ENCODE measurements at regions of chr1 and their contacts with region 1.

Region 1: GRCh38 chr1:40951943-40952743 is 27.4 kb upstream of the CTPS1 start:
- DNase-seq: peak; percentile 84
- H3K4me3 Mint-ChIP-seq: no peak overlapping the region
- H3K27ac Mint-ChIP-seq: no peak overlapping the region
- H3K4me1 Mint-ChIP-seq: peaks cover 49% of the 10 kb centered on the region
- H3K27me3 Mint-ChIP-seq: no peaks in the 10 kb centered on the region
- CTCF ChIP-seq: peak; percentile 94

Region 2: DNA sequence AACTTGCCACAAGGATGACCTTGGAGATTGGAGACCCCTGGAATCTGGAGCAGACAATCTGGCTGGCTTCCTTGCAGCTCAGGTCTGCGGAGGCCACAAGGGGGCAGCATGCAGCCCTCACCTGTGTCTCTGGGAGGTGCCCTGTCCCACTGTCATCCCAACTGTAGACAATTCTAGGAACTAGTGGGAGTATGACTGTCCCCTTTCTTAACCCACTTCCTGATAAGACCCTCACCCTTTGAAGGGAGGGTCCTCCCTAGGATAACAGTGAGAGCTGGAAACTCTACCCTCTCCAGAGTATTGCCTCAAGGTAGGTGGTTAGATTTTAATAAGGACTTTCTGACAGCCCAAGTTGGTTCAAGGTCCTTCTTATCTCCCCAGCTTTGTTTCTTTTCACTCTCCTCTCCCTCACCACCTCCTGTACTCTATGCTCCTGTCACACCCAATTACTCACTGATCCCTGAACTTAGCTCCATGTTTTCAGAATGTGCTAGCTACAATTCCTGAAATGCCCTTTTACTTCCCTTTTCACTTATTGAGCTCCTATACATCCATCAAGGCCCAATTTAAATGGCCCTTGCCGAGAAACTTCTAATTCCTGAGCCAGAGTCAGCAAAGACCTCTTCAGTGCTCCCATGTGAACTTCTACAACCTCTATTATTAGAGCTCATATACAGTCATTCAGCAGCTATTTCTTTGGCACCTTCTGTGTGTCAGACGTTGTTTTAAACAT is 177.7 kb before region 1 on chr1:
- CTCF ChIA-PET with region 1: interaction called, 14 read pairs
- intact Hi-C with region 1: loop called (anchors 2 kb)
- DNase-seq: peak; percentile 77
- H3K4me3 Mint-ChIP-seq: no peak overlapping the region
- H3K27ac Mint-ChIP-seq: no peak overlapping the region
- H3K4me1 Mint-ChIP-seq: peaks cover 5% of the 10 kb centered on the region
- H3K27me3 Mint-ChIP-seq: no peaks in the 10 kb centered on the region
- CTCF ChIP-seq: peak; percentile 88

Region 3: DNA sequence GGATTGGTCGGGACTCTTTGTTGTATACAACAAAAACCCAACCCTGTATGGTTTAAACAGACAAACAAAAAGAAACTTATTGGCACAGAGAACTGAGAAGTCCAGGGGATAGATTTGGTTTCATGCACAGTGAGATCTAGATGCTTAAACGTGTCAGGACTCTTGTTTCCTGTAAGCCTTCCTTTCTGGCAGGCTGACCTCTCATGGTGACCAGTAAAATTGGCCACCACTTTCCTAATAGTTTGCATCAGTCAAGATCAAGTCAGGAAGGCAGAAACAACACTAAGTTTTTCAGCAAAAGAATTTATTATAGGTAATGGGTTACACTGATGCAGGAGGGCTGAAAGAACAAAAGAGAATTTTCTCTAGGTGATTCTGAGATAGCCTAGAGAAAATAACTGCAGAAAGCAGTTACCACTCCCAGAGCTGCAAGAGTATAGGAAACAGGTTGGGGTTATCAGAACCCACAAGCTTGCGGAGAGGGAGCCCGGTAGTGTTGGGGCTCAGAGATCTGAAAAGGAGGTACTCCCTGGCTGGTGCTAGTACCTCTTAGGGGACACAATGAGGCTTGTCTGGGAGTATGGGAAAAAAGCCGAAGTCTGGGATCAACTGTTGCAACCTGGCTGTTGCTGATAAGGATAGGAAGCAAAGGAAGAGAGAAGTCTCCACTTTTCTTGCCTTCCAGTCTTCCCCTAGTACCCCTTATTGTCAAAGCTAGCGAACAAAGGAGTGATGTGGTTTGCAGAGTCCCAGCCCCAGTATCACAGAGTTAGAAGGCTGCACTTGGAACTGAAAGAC is 111.4 kb before region 1 on chr1:
- CTCF ChIA-PET with region 1: no interaction called
- intact Hi-C with region 1: no loop called
- DNase-seq: no peak
- H3K4me3 Mint-ChIP-seq: no peak overlapping the region
- H3K27ac Mint-ChIP-seq: no peak overlapping the region
- H3K4me1 Mint-ChIP-seq: no peaks in the 10 kb centered on the region
- H3K27me3 Mint-ChIP-seq: peaks cover 19% of the 10 kb centered on the region
- CTCF ChIP-seq: no peak

Region 4: GRCh38 chr1:40862008-40862863 is 89.9 kb before region 1 on chr1 and contains the start of gene CITED4:
- CTCF ChIA-PET with region 1: interaction called, 82 read pairs
- intact Hi-C with region 1: loop called (anchors 1 kb)
- DNase-seq: peak; percentile 97
- H3K4me3 Mint-ChIP-seq: peak within 1 kb of the TSS; percentile 91
- H3K27ac Mint-ChIP-seq: peak within 1 kb of the TSS; percentile 95
- H3K4me1 Mint-ChIP-seq: peaks cover 47% of the 10 kb centered on the region
- H3K27me3 Mint-ChIP-seq: peaks cover 18% of the 10 kb centered on the region
- CTCF ChIP-seq: peak; percentile 57
- total RNA-seq, gene CITED4: 81.2 and 85.2 TPM in 2 replicates

Region 5: DNA sequence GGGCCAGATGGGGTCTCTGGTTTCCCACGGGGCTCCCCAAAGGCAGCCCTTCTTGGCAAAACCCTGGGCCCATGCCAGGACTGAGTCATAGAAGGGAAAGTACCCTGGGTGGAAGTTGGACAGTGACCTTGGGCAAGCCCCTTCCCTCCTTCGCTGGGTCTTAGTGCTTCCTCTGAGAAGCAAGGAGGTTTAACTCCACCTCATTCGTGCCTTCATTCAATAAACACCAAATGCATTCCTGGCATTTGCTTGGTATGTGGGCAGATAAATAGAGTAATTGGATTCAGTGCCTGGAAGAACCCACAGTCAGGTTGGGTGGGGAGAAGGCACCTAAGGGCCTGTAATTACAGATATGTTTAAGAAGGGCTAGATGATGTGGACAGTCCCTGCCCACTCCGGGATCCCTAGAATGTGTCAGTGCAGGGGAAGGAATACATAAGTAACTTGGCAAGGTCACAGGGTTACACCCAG is 53.7 kb before region 1 on chr1:
- CTCF ChIA-PET with region 1: interaction called, 19 read pairs
- intact Hi-C with region 1: loop called (anchors 1 kb)
- DNase-seq: peak; percentile 89
- H3K4me3 Mint-ChIP-seq: peak overlapping the region; percentile 39
- H3K27ac Mint-ChIP-seq: peak overlapping the region; percentile 92
- H3K4me1 Mint-ChIP-seq: peaks cover 65% of the 10 kb centered on the region
- H3K27me3 Mint-ChIP-seq: no peaks in the 10 kb centered on the region
- CTCF ChIP-seq: no peak

Region 6: DNA sequence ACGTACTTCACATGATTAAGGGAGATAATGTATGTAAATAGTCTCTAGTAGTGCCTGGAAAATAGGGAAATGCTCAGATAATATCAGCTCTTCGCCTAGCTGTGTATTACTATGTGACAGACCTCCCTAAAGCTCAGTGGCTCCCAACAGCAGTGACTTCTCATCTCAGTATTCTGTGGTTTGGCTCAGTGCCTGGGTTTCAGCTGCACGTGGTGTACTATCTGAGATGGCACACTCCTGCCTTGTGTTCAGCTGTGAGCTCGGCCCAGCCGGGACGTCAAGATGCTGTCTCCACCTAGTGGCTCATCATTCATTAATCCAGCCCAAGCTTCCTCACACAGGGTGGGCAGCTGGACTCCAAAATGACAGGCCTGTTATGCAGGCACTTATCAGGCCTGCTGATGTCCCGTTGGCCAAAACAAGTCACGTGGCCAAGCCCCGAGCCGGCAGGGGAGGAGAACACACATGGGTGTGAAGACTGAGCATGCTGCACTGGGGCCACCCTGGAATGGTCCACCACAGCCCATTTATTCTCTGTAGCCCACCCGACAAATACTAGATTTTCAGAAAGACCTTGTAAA is 51.6 kb after region 1 on chr1:
- CTCF ChIA-PET with region 1: interaction called, 13 read pairs
- intact Hi-C with region 1: loop called (anchors 2 kb)
- DNase-seq: peak; percentile 91
- H3K4me3 Mint-ChIP-seq: no peak overlapping the region
- H3K27ac Mint-ChIP-seq: no peak overlapping the region
- H3K4me1 Mint-ChIP-seq: peaks cover 22% of the 10 kb centered on the region
- H3K27me3 Mint-ChIP-seq: no peaks in the 10 kb centered on the region
- CTCF ChIP-seq: peak; percentile 24

Measured in Calu3 (cell line).